Mammary epithelial cell (primary cell): ENCODE measurements at regions of chr1 and their contacts with region 1.

Region 1: DNA sequence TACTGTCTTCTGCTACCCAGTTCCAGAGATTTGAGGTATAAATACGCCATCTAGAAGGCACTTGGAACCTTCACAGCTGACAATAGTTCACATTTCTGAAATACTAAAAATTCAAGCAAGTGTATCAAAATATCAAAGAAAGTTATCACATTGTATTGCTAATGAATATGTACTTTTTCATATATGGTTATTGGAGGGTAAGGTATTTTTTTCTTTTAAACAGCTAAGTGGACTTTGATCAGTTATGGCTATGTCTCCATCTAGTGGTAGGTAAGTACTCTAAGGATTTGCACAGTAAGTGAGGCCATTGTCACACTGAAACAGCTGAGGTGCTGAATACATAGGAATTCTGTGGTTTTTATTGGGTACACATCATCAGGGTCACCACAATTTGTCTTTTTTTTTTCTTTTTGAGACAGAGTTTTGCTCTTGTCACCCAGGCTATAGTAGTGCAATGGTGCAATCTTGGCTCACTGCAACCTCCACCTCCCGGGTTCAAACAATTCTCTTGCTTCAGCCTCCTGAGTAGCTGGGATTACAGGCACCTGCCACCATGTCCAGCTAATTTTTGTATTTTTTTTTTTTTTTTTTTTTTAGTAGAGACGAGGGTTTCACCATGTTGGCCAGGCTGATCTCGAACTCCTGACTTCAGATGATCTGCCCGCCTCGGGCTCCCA is 49.1 kb upstream of the CR2 start:
- DNase-seq: peak; percentile 52
- H3K4me3 ChIP-seq: no peak overlapping the region
- H3K27ac ChIP-seq: no peak overlapping the region
- H3K4me1 ChIP-seq: no peaks in the 10 kb centered on the region
- H3K27me3 ChIP-seq: no peaks in the 10 kb centered on the region
- CTCF ChIP-seq: peak; percentile 71 to 76

Region 2: DNA sequence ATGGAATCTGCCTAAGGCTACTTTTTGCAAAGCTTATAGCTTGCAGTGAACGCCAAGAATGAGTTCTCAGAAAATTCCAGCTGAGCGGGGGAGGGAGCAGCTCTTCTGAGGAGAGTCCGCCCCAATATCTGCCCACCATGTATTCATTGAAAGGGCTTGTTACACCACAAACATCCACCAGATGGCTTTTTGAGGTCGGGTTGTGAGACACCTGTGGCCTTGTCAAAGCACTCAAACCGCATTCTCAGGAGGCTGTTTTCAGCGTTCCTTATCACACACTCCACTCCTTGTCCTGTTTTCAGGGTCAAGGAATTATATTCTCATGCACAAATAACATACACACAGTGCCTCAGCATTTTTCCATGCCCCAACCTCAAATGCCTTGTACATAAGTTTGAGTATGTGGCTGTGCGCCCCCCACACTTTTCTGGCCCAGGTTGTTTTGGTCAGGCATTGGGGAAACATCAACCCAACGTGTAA is 320.2 kb before region 1 on chr1:
- CTCF ChIA-PET with region 1: interaction called, 7 read pairs
- dilution Hi-C with region 1: loop called (anchors 5 kb)
- in situ Hi-C with region 1: loop called in 1 of 2 experiments (anchors 10 kb)
- intact Hi-C with region 1: loop called (anchors 1 kb)
- DNase-seq: peak; percentile 59
- H3K4me3 ChIP-seq: no peak overlapping the region
- H3K27ac ChIP-seq: no peak overlapping the region
- H3K4me1 ChIP-seq: peaks cover 3% of the 10 kb centered on the region
- H3K27me3 ChIP-seq: no peaks in the 10 kb centered on the region
- CTCF ChIP-seq: peak; percentile 56 to 73

Region 3: DNA sequence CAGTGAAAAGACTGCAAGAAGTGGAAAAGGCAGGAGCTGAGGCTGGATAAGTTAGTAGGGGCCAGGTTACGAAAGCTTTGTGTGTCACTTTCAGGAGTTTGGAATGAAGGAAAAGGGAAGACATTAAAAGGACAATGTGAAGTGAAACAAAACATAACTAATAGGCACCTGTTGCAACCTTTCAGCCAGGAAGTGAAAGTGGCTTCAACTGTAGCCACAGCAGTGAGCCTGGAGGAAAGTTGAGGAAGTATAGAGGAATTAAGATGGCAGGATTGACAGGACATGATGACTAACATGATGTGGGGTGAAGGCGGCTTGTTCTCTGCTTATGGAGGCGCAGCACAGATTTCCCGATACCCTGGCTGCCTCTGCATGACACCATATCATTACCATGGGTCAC is 232.1 kb before region 1 on chr1:
- CTCF ChIA-PET with region 1: no interaction called
- dilution Hi-C with region 1: no loop called
- in situ Hi-C with region 1: loop called in 1 of 2 experiments (anchors 10 kb)
- intact Hi-C with region 1: no loop called
- DNase-seq: no peak
- H3K4me3 ChIP-seq: no peak overlapping the region
- H3K27ac ChIP-seq: no peak overlapping the region
- H3K4me1 ChIP-seq: no peaks in the 10 kb centered on the region
- H3K27me3 ChIP-seq: no peaks in the 10 kb centered on the region
- CTCF ChIP-seq: no peak

Region 4: GRCh38 chr1:207259391-207259790 is 145.6 kb before region 1 on chr1:
- CTCF ChIA-PET with region 1: interaction called, 5 read pairs
- dilution Hi-C with region 1: no loop called
- in situ Hi-C with region 1: no loop called
- intact Hi-C with region 1: loop called (anchors 1 kb)
- DNase-seq: peak; percentile 29
- H3K4me3 ChIP-seq: no peak overlapping the region
- H3K27ac ChIP-seq: no peak overlapping the region
- H3K4me1 ChIP-seq: peaks cover 4% of the 10 kb centered on the region
- H3K27me3 ChIP-seq: no peaks in the 10 kb centered on the region
- CTCF ChIP-seq: peak; percentile 41 to 53

Region 5: GRCh38 chr1:207440626-207441025 is 35.6 kb after region 1 on chr1:
- CTCF ChIA-PET with region 1: no interaction called
- dilution Hi-C with region 1: no loop called
- in situ Hi-C with region 1: no loop called
- intact Hi-C with region 1: no loop called
- DNase-seq: no peak
- H3K4me3 ChIP-seq: no peak overlapping the region
- H3K27ac ChIP-seq: no peak overlapping the region
- H3K4me1 ChIP-seq: no peaks in the 10 kb centered on the region
- H3K27me3 ChIP-seq: peaks cover 11% of the 10 kb centered on the region
- CTCF ChIP-seq: no peak

Region 6: GRCh38 chr1:207499573-207499972 is 94.6 kb after region 1 on chr1:
- CTCF ChIA-PET with region 1: no interaction called
- dilution Hi-C with region 1: no loop called
- in situ Hi-C with region 1: loop called in 1 of 2 experiments (anchors 5 kb)
- intact Hi-C with region 1: loop called (anchors 1 kb)
- DNase-seq: peak; percentile 47
- H3K4me3 ChIP-seq: no peak overlapping the region
- H3K27ac ChIP-seq: no peak overlapping the region
- H3K4me1 ChIP-seq: peaks cover 7% of the 10 kb centered on the region
- H3K27me3 ChIP-seq: peaks cover 13% of the 10 kb centered on the region
- CTCF ChIP-seq: peak; percentile 70 to 81